Endothelial cell of umbilical vein (primary cell): ENCODE measurements at regions of chr15 and their contacts with region 1.

Region 1: DNA sequence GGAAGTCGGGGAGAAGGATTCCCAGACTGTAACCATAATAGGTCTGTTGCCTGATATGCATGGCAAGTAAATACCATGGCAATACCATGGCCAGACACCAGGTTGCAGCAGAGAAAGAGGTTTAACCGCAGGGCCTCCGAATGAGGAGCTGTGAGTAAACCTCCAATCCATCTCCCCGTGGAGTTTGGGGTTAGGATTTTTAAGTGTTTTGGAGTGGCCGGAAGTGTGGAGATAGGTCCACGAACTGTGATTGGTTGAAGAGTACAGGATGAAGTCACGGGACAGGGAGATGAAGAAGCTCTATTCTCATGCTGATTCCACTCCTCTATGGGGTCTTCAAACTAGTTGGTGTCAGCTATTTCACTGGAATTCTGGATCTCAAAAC is 127.9 kb downstream of the ST8SIA2 start:
- DNase-seq: peak; percentile 89
- H3K4me3 ChIP-seq: no peak overlapping the region
- H3K27ac ChIP-seq: no peak overlapping the region
- H3K4me1 ChIP-seq: peaks cover 6% of the 10 kb centered on the region
- H3K27me3 ChIP-seq: no peaks in the 10 kb centered on the region
- CTCF ChIP-seq: peak; percentile 72
- POLR2A ChIP-seq: no peak

Region 2: GRCh38 chr15:92565351-92566125 is 43.9 kb after region 1 on chr15:
- CTCF ChIA-PET with region 1: interaction called, 19 read pairs
- POLR2A ChIA-PET with region 1: no interaction called
- dilution Hi-C with region 1: no loop called
- intact Hi-C with region 1: no loop called
- DNase-seq: no peak
- H3K4me3 ChIP-seq: no peak overlapping the region
- H3K27ac ChIP-seq: no peak overlapping the region
- H3K4me1 ChIP-seq: peaks cover 7% of the 10 kb centered on the region
- H3K27me3 ChIP-seq: no peaks in the 10 kb centered on the region
- CTCF ChIP-seq: no peak
- POLR2A ChIP-seq: no peak

Region 3: GRCh38 chr15:92617549-92618520 is 96.2 kb after region 1 on chr15:
- CTCF ChIA-PET with region 1: interaction called, 22 read pairs
- POLR2A ChIA-PET with region 1: no interaction called
- dilution Hi-C with region 1: no loop called
- intact Hi-C with region 1: loop called (anchors 1 kb)
- DNase-seq: peak; percentile 99
- H3K4me3 ChIP-seq: no peak overlapping the region
- H3K27ac ChIP-seq: peak overlapping the region; percentile 72
- H3K4me1 ChIP-seq: peaks cover 29% of the 10 kb centered on the region
- H3K27me3 ChIP-seq: no peaks in the 10 kb centered on the region
- CTCF ChIP-seq: no peak
- POLR2A ChIP-seq: no peak

Region 4: DNA sequence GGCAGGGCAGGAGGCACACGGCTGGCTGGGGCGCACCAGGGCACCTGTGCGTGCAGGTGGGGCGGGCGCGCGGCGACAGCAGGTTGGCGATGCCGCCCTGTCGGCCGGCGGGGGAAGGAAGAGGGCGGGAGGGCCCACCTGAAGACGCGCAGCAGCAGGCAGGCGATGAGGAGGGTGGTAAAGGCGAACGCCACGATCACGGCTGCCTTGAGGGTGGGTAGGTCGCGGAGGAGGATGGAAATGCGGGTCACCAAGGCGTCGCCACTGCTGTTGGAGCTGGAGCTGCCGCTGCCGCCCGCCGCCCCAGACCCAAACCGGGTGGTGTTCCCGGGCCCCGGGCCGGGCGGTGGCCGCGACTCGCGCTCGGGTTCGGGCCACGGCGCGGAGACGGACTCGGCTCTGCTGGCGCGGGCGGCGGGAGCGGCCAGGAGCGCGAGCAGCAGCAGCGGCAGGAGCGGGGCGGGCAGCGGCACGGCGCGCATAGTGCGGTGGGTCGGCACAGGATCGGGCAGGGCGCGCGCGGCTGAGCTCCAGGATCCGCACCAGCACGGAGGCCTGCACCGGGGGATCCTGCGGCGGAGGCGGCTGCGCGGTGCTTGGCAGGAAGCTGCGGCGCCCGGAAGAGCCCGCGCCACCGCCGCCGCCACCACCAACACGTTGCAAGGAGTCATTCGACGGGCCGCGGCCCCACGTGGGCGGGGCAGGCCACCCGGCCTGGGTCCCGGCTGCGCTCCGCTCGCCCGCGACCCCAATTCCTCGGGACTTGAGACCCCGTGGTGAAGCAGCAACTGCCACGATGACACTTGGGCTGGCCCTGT is 133.8 kb after region 1 on chr15 and contains the start of gene FAM174B:
- CTCF ChIA-PET with region 1: interaction called, 39 read pairs
- POLR2A ChIA-PET with region 1: no interaction called
- dilution Hi-C with region 1: no loop called
- intact Hi-C with region 1: loop called (anchors 1 kb)
- DNase-seq: peak; percentile 51
- H3K4me3 ChIP-seq: peak within 1 kb of the TSS; percentile 47 to 93 (median 81)
- H3K27ac ChIP-seq: peak within 1 kb of the TSS; percentile 56
- H3K4me1 ChIP-seq: peaks cover 22% of the 10 kb centered on the region
- H3K27me3 ChIP-seq: no peaks in the 10 kb centered on the region
- CTCF ChIP-seq: no peak
- POLR2A ChIP-seq: peak; percentile 53
- total RNA-seq, gene FAM174B: 20.0 and 30.2 TPM in 2 replicates

Region 5: DNA sequence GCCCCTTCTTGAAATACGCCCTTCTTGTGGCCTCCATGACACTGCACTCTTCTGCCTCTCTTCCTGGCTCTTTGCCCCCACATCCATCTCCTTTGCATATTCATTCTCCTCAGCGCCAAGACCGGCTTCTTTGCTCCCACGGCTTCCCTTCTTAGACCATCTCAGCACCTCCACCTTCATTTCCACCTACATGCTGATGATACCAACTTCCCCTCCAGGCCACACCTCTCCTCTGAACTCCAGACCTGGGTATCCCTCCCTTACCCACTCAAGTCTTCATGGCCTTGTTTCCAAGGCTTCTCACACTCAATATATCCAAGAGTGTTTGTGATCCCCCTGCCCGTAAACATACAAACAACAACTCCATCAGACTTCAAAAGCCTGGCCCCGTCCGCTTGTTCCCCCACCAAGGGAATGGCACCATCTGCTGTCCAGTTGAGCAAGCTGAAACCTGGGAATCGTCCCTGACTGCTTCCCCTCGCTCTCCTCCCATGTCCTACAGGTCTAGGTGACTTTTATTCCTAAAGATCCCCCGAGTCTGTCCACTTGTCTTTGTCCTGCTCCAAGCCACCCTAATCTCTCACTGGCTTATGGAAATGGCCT is 161.7 kb after region 1 on chr15:
- CTCF ChIA-PET with region 1: interaction called, 78 read pairs
- POLR2A ChIA-PET with region 1: no interaction called
- dilution Hi-C with region 1: no loop called
- intact Hi-C with region 1: loop called (anchors 1 kb)
- DNase-seq: peak; percentile 40
- H3K4me3 ChIP-seq: no peak overlapping the region
- H3K27ac ChIP-seq: no peak overlapping the region
- H3K4me1 ChIP-seq: peaks cover 5% of the 10 kb centered on the region
- H3K27me3 ChIP-seq: no peaks in the 10 kb centered on the region
- CTCF ChIP-seq: peak; percentile 27 to 54
- POLR2A ChIP-seq: no peak

Region 6: GRCh38 chr15:92714477-92715401 is 193.1 kb after region 1 on chr15:
- CTCF ChIA-PET with region 1: interaction called, 218 read pairs
- POLR2A ChIA-PET with region 1: no interaction called
- dilution Hi-C with region 1: no loop called
- intact Hi-C with region 1: loop called (anchors 1 kb)
- DNase-seq: peak; percentile 87
- H3K4me3 ChIP-seq: peak overlapping the region; percentile 27 to 62 (median 58)
- H3K27ac ChIP-seq: peak overlapping the region; percentile 74
- H3K4me1 ChIP-seq: peaks cover 12% of the 10 kb centered on the region
- H3K27me3 ChIP-seq: no peaks in the 10 kb centered on the region
- CTCF ChIP-seq: peak; percentile 69 to 85
- POLR2A ChIP-seq: peak; percentile 31

Region 7: GRCh38 chr15:93063262-93063671 is 541.7 kb after region 1 on chr15:
- CTCF ChIA-PET with region 1: no interaction called
- POLR2A ChIA-PET with region 1: no interaction called
- dilution Hi-C with region 1: no loop called
- intact Hi-C with region 1: no loop called
- DNase-seq: no peak
- H3K4me3 ChIP-seq: no peak overlapping the region
- H3K27ac ChIP-seq: no peak overlapping the region
- H3K4me1 ChIP-seq: no peaks in the 10 kb centered on the region
- H3K27me3 ChIP-seq: no peaks in the 10 kb centered on the region
- CTCF ChIP-seq: no peak
- POLR2A ChIP-seq: no peak